Panc1 (cell line): ENCODE measurements at regions of chr2 and their contacts with region 1.

Region 1: GRCh38 chr2:85551698-85552678 is 9.3 kb downstream of the GGCX start:
- DNase-seq: no peak
- ATAC-seq: peak; percentile 55
- H3K4me3 ChIP-seq: no peak overlapping the region
- H3K27ac ChIP-seq: peak overlapping the region; percentile 100
- H3K4me1 ChIP-seq: peaks cover 50% of the 10 kb centered on the region
- H3K27me3 ChIP-seq: no peaks in the 10 kb centered on the region
- CTCF ChIP-seq: peak; percentile 90

Region 2: DNA sequence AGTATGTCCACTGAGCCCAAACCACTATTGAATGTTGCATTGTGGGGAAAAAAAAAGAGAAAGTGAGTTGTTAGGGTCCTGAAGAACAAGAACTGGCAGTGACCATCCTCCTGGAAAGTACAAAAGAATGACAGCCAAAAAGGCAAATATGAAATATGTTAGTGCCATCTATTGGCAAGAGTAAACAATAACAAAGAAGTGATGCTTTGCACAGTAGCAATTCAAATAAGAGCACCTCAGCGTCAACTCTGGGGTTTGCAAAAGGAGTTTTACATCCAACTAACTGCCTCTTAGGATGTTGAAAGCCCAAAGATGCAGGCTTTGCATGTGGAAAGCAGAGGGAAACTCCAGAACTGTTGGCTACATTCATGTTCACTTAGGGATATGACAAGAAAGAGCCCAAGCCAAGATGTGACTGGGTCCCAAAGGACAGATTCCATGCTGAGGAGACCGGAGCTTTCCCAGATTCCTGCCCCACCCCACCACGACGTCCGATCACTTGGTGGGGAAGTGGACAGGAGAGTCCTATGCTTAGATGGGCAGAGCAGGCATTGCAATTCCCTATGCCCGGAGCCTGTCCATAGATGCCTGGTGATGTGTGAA is 686.7 kb before region 1 on chr2:
- CTCF ChIA-PET with region 1: no interaction called
- POLR2A ChIA-PET with region 1: no interaction called
- in situ Hi-C with region 1: no loop called
- intact Hi-C with region 1: no loop called
- DNase-seq: no peak
- ATAC-seq: peak; percentile 65
- H3K4me3 ChIP-seq: no peak overlapping the region
- H3K27ac ChIP-seq: no peak overlapping the region
- H3K4me1 ChIP-seq: no peaks in the 10 kb centered on the region
- H3K27me3 ChIP-seq: peaks cover 4% of the 10 kb centered on the region; the same call in 1 of the 2 replicates
- CTCF ChIP-seq: peak; percentile 63

Region 3: GRCh38 chr2:85390941-85391669 is 160.9 kb before region 1 on chr2:
- CTCF ChIA-PET with region 1: no interaction called
- POLR2A ChIA-PET with region 1: no interaction called
- in situ Hi-C with region 1: no loop called
- intact Hi-C with region 1: loop called (anchors 1 kb)
- DNase-seq: no peak
- ATAC-seq: peak; percentile 86
- H3K4me3 ChIP-seq: no peak overlapping the region
- H3K27ac ChIP-seq: no peak overlapping the region
- H3K4me1 ChIP-seq: no peaks in the 10 kb centered on the region
- H3K27me3 ChIP-seq: no peaks in the 10 kb centered on the region
- CTCF ChIP-seq: peak; percentile 94

Region 4: DNA sequence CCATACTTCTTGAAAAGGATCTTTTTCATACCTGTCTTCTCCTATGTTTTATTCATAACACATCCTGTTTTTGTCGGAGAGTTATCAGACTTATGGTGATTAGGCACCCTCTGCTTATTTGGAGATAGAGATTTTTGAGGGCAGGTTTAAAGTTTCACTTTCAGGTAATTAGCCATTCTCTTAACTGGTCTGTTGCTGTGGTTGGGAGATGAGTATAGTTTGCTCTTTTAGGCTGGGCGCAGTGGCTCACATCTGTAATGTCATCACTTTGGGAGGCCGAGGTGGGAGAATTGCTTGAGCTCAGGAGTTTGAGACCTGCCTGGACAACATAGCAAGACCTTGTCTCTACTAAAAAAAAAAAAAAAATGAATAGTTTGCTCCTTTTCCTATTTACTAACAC is 90.7 kb after region 1 on chr2:
- CTCF ChIA-PET with region 1: interaction called, 11 read pairs
- POLR2A ChIA-PET with region 1: no interaction called
- in situ Hi-C with region 1: no loop called
- intact Hi-C with region 1: no loop called
- DNase-seq: no peak
- ATAC-seq: no peak
- H3K4me3 ChIP-seq: no peak overlapping the region
- H3K27ac ChIP-seq: no peak overlapping the region
- H3K4me1 ChIP-seq: no peaks in the 10 kb centered on the region
- H3K27me3 ChIP-seq: no peaks in the 10 kb centered on the region
- CTCF ChIP-seq: no peak

Region 5: DNA sequence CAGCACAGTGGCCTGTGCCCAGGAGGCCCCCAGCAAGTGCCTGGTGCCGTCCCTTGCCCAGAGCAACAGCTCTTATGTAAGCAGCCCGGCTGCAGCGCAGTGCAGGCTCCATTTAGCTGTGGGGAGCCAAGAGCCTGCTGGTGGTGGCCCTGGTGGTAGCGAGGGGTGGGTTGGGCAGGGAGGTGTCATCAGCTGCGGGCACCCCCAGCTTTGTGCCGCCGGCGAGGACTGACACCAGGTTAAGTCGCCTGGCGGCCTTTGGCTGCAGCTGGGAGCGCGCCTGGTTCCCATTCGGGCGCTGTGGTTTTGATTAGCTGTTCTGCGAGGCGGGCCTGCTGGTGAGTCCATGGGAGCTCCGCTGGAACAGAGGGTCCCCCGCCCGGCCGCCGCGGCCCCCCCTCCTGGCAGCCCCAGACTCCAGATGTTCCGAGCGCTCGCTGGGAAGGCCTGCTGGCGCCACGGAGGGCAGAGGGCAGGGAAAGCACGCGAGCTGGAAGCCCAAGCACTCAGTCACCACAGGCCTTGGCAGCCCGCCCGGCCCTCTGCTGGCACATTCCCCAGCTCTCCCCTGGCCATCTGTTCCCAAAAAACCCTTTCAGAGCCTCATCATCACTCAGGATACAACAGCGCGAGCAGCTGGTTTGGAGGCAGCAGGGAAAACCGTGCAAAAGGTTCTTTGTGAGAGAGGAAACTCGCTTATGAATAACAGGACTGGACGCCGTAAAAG is 220.2 kb after region 1 on chr2:
- CTCF ChIA-PET with region 1: no interaction called
- POLR2A ChIA-PET with region 1: no interaction called
- in situ Hi-C with region 1: no loop called
- intact Hi-C with region 1: no loop called
- DNase-seq: peak; percentile 77
- ATAC-seq: peak; percentile 88
- H3K4me3 ChIP-seq: peak overlapping the region in 1 of 2 experiments; percentile 19; a peak in 2 of 4 replicates
- H3K27ac ChIP-seq: peak overlapping the region; percentile 89
- H3K4me1 ChIP-seq: peaks cover 66% of the 10 kb centered on the region
- H3K27me3 ChIP-seq: no peaks in the 10 kb centered on the region
- CTCF ChIP-seq: no peak